ENCODE measurements at regions of chr3 and their contacts with region 1.

Region 1: GRCh38 chr3:133578548-133579191 is 5.2 kb downstream of the CDV3 start:
- DNase-seq: no peak
- ATAC-seq: no peak
- H3K4me3 Mint-ChIP-seq: peak overlapping the region; percentile 99
- H3K27ac Mint-ChIP-seq: peak overlapping the region; percentile 92
- H3K4me1 Mint-ChIP-seq: peaks cover 58% of the 10 kb centered on the region
- H3K27me3 Mint-ChIP-seq: no peaks in the 10 kb centered on the region

Region 2: DNA sequence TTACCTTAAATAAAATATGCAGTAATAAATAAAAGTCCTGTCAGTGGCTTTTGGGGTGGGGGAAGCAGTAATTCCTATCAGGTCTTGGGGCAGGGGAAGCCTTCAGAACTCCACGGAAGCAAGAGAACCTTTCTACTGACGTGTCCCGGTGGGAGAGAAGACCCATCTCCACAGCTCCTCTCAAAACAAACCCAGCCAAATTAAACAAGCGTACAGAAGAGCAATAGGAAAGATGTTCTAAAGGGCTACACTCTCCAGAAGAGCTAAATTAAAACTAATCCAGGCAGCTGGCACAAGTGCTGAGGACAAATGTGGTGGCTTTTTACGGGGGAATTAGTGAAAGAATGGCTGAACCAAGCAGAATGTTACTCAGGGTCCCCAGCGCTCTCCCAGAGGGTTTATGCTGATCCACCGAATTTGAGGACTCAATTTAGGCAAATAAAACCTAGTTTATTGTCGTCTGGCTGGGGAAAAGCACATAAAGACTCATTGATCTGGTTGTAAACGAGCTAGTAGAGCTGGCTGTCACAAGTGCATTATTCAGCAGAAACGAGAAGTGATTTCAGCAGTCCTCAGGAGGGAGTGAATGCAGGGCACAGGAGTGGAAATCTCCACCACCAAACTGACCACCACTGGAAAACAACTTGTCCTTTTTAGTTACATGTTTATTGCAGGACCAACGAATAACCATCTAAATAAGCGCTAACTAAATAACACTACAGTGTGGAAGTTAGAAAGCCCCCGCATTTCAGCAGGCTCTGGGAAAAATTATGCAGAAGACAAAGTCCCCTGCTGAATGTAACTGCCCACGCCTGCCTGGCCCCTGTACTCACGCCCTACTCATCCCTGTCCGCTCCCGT is 165.3 kb before region 1 on chr3:
- CTCF ChIA-PET with region 1: no interaction called
- POLR2A ChIA-PET with region 1: no interaction called
- intact Hi-C with region 1: no loop called
- DNase-seq: peak; percentile 21
- ATAC-seq: peak; percentile 30
- H3K4me3 Mint-ChIP-seq: no peak overlapping the region
- H3K27ac Mint-ChIP-seq: no peak overlapping the region
- H3K4me1 Mint-ChIP-seq: peaks cover 3% of the 10 kb centered on the region
- H3K27me3 Mint-ChIP-seq: no peaks in the 10 kb centered on the region

Region 3: DNA sequence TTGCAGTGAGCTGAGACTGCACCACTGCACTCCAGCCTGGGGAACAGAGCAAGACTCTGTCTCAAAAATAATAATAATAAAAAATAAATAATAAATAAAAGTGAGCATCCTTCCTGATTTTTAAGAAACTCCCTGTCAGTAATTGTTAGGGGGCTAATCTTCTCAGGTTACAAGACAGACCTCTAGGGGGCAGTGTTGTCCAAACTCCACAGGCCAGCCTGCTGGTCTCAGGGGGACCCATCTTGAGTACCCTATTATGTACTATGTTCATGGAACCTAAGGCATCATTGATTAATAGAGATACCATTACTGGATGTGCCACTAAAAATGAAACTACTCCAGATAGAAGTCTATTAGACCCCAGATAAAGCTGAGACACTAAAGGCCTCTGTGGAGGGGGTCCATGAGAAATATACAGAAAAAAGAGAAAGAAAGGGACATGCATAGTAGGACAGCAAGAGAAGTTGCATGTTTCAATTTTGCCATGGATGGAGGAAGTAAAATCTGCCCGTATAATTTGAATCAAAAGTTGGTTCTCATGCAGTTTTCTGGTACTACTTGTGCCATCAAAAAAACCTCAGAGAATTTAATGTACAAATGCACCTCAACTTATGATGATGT is 90.6 kb before region 1 on chr3:
- CTCF ChIA-PET with region 1: interaction called, 31 read pairs
- POLR2A ChIA-PET with region 1: interaction called, 21 read pairs
- intact Hi-C with region 1: loop called in 1 of 2 experiments (anchors 2 kb)
- DNase-seq: peak; percentile 69
- ATAC-seq: no peak
- H3K4me3 Mint-ChIP-seq: no peak overlapping the region
- H3K27ac Mint-ChIP-seq: no peak overlapping the region
- H3K4me1 Mint-ChIP-seq: peaks cover 49% of the 10 kb centered on the region
- H3K27me3 Mint-ChIP-seq: no peaks in the 10 kb centered on the region

Region 4: DNA sequence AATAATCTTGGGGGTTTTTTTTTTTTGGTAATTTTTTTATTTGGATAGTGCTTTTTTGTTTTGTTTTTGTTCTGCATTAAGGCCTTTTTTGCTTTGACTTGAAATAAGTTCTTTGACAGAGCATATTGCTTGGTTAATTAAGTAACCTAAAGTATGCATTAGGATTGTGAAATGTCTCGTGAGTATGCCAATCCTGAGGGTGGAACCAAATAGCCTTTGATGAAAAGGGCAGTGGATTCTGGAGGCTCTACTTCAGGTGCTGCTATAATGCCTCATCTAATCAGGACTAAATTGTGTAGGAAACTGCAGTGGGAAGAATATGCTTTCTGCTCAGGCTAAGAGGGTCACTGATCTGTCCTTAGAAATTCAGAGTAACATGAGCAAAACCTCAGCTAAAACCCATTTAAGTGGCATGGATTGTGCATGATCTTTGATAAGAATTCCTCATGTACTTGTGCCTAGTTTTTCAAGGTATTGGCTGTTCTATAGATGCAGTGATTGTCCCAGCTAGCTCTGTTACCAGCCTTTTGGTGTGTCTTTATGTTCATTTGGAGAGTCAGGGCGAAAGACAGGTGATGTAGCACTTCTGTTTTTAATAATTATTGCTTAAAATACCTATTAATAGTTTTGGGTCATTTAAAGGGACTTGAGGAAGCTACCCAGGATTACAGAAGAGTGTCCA is 10.3 kb after region 1 on chr3:
- CTCF ChIA-PET with region 1: interaction called, 11 read pairs
- POLR2A ChIA-PET with region 1: interaction called, 4 read pairs
- intact Hi-C with region 1: loop called in 1 of 2 experiments (anchors 2 kb)
- DNase-seq: no peak
- ATAC-seq: no peak
- H3K4me3 Mint-ChIP-seq: no peak overlapping the region
- H3K27ac Mint-ChIP-seq: no peak overlapping the region
- H3K4me1 Mint-ChIP-seq: peaks cover 30% of the 10 kb centered on the region
- H3K27me3 Mint-ChIP-seq: no peaks in the 10 kb centered on the region

Region 5: GRCh38 chr3:133620066-133620784 is 41.6 kb after region 1 on chr3:
- CTCF ChIA-PET with region 1: no interaction called
- POLR2A ChIA-PET with region 1: no interaction called
- intact Hi-C with region 1: loop called in 1 of 2 experiments (anchors 2 kb)
- DNase-seq: no peak
- ATAC-seq: no peak
- H3K4me3 Mint-ChIP-seq: no peak overlapping the region
- H3K27ac Mint-ChIP-seq: no peak overlapping the region
- H3K4me1 Mint-ChIP-seq: no peaks in the 10 kb centered on the region
- H3K27me3 Mint-ChIP-seq: no peaks in the 10 kb centered on the region

Region 6: DNA sequence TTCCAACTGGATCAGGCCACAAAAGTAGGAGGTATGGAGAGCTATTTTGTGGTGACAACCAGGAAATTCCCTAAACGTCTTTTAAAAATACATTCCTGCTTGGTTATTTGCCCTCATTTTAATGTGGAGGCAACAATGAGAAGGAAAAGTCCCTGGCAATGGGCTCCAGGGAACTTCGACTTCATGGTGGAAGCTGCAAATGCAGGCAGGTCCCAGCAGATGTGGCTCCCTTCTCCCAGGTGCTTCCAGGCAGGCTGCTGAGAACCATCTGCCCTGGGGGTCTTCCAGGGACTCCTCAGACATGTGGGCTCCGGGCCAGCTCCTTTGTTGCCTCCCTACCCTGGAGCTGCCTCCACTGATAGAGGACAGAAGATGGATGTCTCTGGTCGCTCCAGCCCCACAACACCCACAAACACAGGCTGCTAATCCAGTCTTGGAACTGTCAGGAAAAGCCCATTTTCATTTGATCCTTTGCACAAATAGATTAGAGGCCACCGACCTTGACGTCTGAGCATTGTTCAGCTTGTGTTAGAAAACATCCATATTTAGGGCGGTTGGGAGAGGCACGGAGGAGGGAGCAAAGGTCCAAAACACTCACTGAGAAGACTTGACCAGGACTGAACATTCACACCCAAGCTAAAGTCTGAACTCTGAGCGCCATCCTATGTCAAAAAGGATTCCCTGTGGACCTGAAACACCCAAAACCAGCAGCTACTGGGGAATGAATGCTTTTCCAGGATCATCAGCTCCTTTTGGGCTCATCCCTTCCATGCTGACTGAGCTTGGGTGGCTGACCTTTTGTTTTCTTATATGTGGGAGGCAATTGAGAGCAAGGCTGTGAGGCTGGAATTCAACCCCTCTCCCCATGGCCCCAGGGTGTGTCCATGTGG is 481.2 kb after region 1 on chr3:
- CTCF ChIA-PET with region 1: no interaction called
- POLR2A ChIA-PET with region 1: no interaction called
- intact Hi-C with region 1: no loop called
- DNase-seq: no peak
- ATAC-seq: no peak
- H3K4me3 Mint-ChIP-seq: no peak overlapping the region
- H3K27ac Mint-ChIP-seq: no peak overlapping the region
- H3K4me1 Mint-ChIP-seq: no peaks in the 10 kb centered on the region
- H3K27me3 Mint-ChIP-seq: peaks cover 2% of the 10 kb centered on the region

Measured in activated CD4-positive, alpha-beta T cell treated with anti-CD3 and anti-CD28 coated beads for 36 hours (primary cell).